ENCODE measurements at regions of chr4 and their contacts with region 1.

Region 1: DNA sequence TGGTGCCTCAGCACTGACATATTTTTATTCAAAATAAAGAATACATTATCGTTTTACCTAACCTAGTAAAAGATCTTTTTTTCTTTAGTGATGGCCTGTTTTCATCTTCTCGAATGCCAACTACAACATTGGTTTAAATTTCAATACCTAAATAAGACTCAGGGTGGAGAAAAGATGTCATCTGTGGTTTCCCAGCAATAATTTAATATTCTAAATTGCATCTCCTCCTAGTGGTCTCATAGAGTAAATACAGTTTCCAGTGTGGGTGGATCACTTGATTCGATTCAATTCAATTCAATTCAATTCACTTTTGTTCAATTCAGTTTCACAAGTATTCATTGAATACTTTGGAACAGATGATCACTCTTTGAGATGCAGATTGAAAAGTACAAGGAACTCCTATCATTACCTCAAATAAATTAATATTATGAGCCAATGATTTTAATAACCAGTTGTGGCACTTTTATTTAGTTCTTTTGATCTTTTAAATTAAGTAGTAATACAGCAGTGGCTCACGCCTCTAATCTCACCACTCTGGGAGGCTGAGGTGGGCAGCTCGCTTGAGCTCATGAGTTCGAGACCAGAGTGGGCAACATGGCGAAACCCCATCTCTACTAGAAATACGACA is 427.2 kb downstream of the FAT4 start:
- DNase-seq: peak; percentile 61
- H3K4me3 ChIP-seq: no peak overlapping the region
- H3K27ac ChIP-seq: peak overlapping the region; percentile 96
- H3K4me1 ChIP-seq: peaks cover 33% of the 10 kb centered on the region
- H3K27me3 ChIP-seq: no peaks in the 10 kb centered on the region
- CTCF ChIP-seq: peak; percentile 49 to 50
- POLR2A ChIP-seq: no peak

Region 2: DNA sequence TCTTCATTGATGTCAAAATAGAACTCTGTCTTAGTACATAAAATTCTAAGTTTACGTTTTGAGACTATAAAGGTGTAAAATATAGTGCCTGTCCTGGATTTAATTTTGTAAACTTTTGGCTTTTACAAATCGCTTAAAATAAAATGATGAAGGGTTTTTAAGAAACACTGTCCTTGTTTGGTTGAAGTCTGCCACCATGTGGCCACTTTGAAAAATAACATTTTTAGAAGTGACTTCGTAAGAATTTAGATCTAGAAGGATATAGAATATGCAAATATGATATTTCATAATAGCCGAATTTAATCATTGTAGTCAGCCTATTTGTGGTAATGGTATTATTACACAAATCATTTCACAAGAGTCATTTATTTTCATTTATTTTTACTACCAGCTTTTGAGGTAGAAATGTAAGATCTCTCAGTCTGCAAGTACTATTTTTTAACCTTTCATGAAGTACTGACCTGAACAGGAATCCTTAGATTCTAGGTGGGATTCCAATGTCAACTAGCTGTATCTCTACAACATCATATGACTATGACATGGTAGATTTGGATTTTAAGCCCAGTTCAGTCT is 458.1 kb before region 1 on chr4:
- CTCF ChIA-PET with region 1: no interaction called
- POLR2A ChIA-PET with region 1: no interaction called
- dilution Hi-C with region 1: no loop called
- intact Hi-C with region 1: no loop called
- DNase-seq: peak; percentile 54
- H3K4me3 ChIP-seq: no peak overlapping the region
- H3K27ac ChIP-seq: no peak overlapping the region
- H3K4me1 ChIP-seq: peaks cover 4% of the 10 kb centered on the region
- H3K27me3 ChIP-seq: no peaks in the 10 kb centered on the region
- CTCF ChIP-seq: peak; percentile 8 to 26
- POLR2A ChIP-seq: no peak

Region 3: GRCh38 chr4:125389713-125390112 is 352.2 kb before region 1 on chr4:
- CTCF ChIA-PET with region 1: no interaction called
- POLR2A ChIA-PET with region 1: no interaction called
- dilution Hi-C with region 1: no loop called
- intact Hi-C with region 1: loop called (anchors 1 kb)
- DNase-seq: peak; percentile 83
- H3K4me3 ChIP-seq: peak overlapping the region in 1 of 3 experiments; percentile 3
- H3K27ac ChIP-seq: peak overlapping the region; percentile 60
- H3K4me1 ChIP-seq: peaks cover 38% of the 10 kb centered on the region
- H3K27me3 ChIP-seq: no peaks in the 10 kb centered on the region
- CTCF ChIP-seq: no peak
- POLR2A ChIP-seq: no peak

Region 4: GRCh38 chr4:125520258-125520990 is 221.5 kb before region 1 on chr4:
- CTCF ChIA-PET with region 1: no interaction called
- POLR2A ChIA-PET with region 1: no interaction called
- dilution Hi-C with region 1: no loop called
- intact Hi-C with region 1: loop called (anchors 1 kb)
- DNase-seq: peak; percentile 91
- H3K4me3 ChIP-seq: no peak overlapping the region
- H3K27ac ChIP-seq: peak overlapping the region; percentile 34
- H3K4me1 ChIP-seq: peaks cover 25% of the 10 kb centered on the region
- H3K27me3 ChIP-seq: no peaks in the 10 kb centered on the region
- CTCF ChIP-seq: no peak
- POLR2A ChIP-seq: peak; percentile 73

Region 5: DNA sequence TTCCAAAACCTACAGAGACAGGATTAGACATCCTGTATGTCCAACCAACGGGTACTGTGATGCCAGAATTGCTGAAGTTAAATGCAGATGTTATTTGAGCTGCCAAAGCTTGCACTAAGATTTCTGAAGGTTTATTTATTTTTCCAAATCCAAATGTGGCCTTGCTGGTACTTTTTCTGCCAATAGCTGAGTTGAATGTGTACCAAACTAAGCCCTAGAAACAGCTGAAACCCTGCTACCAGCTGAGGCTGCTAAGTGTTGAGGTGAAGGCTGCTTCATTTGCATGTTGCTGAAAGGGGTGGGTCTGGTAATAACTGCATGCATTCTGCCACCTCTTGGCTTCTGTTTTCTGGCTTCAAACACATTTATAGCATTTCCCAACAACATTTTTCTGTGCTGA is 60.7 kb before region 1 on chr4:
- CTCF ChIA-PET with region 1: no interaction called
- POLR2A ChIA-PET with region 1: no interaction called
- dilution Hi-C with region 1: no loop called
- intact Hi-C with region 1: no loop called
- DNase-seq: no peak
- H3K4me3 ChIP-seq: no peak overlapping the region
- H3K27ac ChIP-seq: no peak overlapping the region
- H3K4me1 ChIP-seq: no peaks in the 10 kb centered on the region
- H3K27me3 ChIP-seq: no peaks in the 10 kb centered on the region
- CTCF ChIP-seq: no peak
- POLR2A ChIP-seq: no peak

Region 6: DNA sequence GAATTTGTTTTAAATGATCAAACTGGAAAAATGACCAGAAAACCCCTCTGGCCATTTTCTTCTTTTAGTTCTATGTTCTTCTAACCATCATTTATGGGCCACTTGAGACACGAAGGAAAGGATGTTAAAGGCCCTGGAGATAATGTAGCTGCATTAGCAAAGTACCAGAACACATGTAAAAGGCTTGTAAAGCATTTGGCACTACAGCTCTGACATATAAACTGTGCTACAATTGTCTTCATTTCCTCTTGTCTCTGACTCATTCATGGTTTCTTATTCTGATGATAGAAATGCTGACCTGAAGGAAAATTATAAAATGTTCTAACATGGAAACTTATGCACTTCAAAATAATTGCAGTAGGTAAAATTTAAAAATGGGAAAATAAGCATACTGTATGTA is 38.5 kb before region 1 on chr4:
- CTCF ChIA-PET with region 1: no interaction called
- POLR2A ChIA-PET with region 1: no interaction called
- dilution Hi-C with region 1: no loop called
- intact Hi-C with region 1: loop called (anchors 1 kb)
- DNase-seq: peak; percentile 75
- H3K4me3 ChIP-seq: no peak overlapping the region
- H3K27ac ChIP-seq: no peak overlapping the region
- H3K4me1 ChIP-seq: peaks cover 20% of the 10 kb centered on the region
- H3K27me3 ChIP-seq: no peaks in the 10 kb centered on the region
- CTCF ChIP-seq: no peak
- POLR2A ChIP-seq: no peak

Region 7: GRCh38 chr4:125728568-125728967 is 13.4 kb before region 1 on chr4:
- CTCF ChIA-PET with region 1: interaction called, 14 read pairs
- POLR2A ChIA-PET with region 1: interaction called, 3 read pairs
- dilution Hi-C with region 1: no loop called
- intact Hi-C with region 1: no loop called
- DNase-seq: peak; percentile 78
- H3K4me3 ChIP-seq: no peak overlapping the region
- H3K27ac ChIP-seq: no peak overlapping the region
- H3K4me1 ChIP-seq: peaks cover 13% of the 10 kb centered on the region
- H3K27me3 ChIP-seq: no peaks in the 10 kb centered on the region
- CTCF ChIP-seq: no peak
- POLR2A ChIP-seq: no peak

Measured in endothelial cell of umbilical vein (primary cell).